ENCODE measurements at regions of chr15 and their contacts with region 1.

Region 1: GRCh38 chr15:49410641-49411040 is 12.4 kb upstream of the FGF7 start:
- DNase-seq: no peak
- ATAC-seq: no peak
- H3K4me3 ChIP-seq: no peak overlapping the region
- H3K27ac ChIP-seq: no peak overlapping the region
- H3K4me1 ChIP-seq: no peaks in the 10 kb centered on the region
- H3K27me3 ChIP-seq: no peaks in the 10 kb centered on the region
- CTCF ChIP-seq: no peak
- POLR2A ChIP-seq: no peak
- RAD21 ChIP-seq: no peak

Region 2: GRCh38 chr15:49421991-49422390 is 11.3 kb after region 1 on chr15:
- CTCF ChIA-PET with region 1: interaction called, 12 read pairs
- POLR2A ChIA-PET with region 1: no interaction called
- RAD21 ChIA-PET with region 1: no interaction called
- intact Hi-C with region 1: no loop called
- DNase-seq: peak; percentile 54
- ATAC-seq: peak; percentile 65
- H3K4me3 ChIP-seq: no peak overlapping the region
- H3K27ac ChIP-seq: no peak overlapping the region
- H3K4me1 ChIP-seq: no peaks in the 10 kb centered on the region
- H3K27me3 ChIP-seq: no peaks in the 10 kb centered on the region
- CTCF ChIP-seq: peak; percentile 68 to 77 (median 70)
- POLR2A ChIP-seq: no peak
- RAD21 ChIP-seq: peak; percentile 68

Region 3: GRCh38 chr15:49769225-49769624 is 358.6 kb after region 1 on chr15:
- CTCF ChIA-PET with region 1: no interaction called
- POLR2A ChIA-PET with region 1: no interaction called
- RAD21 ChIA-PET with region 1: no interaction called
- intact Hi-C with region 1: no loop called
- DNase-seq: no peak
- ATAC-seq: no peak
- H3K4me3 ChIP-seq: no peak overlapping the region
- H3K27ac ChIP-seq: no peak overlapping the region
- H3K4me1 ChIP-seq: no peaks in the 10 kb centered on the region
- H3K27me3 ChIP-seq: no peaks in the 10 kb centered on the region
- CTCF ChIP-seq: no peak
- POLR2A ChIP-seq: no peak
- RAD21 ChIP-seq: no peak